PC-9 (cell line): ENCODE measurements at regions of chr9 and their contacts with region 1.

Region 1: DNA sequence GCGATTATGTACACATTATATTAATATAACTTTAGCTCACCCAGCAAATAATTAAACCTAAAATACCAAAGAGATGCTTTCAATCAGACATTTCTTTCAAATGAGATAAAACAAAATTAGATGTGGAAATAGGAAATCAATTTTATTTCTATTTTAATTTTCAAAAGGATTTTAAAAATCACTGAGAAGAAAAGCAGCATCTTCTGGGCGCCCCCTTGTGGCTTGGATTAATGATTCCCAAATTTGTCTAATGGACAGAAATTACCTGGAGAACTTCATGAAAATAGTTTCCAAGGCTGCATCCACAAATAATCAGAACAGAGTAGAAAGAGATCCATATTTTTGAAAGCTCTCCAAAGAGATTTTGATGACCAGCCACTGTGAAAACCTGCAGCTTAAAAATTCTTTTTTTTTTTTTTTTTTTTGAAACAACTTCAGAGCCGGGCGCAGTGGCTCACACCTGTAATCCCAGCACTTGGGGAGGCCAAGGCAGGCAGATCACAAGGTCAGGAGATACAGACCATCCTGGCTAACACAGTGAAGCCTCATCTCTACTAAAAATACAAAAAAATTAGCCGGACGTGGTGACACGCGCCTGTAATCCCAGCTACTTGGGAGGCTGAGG is 50.9 kb upstream of the CEMIP2 start:
- DNase-seq: peak in 1 of 2 experiments; percentile 28
- H3K4me3 ChIP-seq: no peak overlapping the region
- H3K27ac ChIP-seq: no peak overlapping the region
- H3K4me1 ChIP-seq: no peaks in the 10 kb centered on the region
- H3K27me3 ChIP-seq: no peaks in the 10 kb centered on the region
- CTCF ChIP-seq: peak; percentile 90

Region 2: DNA sequence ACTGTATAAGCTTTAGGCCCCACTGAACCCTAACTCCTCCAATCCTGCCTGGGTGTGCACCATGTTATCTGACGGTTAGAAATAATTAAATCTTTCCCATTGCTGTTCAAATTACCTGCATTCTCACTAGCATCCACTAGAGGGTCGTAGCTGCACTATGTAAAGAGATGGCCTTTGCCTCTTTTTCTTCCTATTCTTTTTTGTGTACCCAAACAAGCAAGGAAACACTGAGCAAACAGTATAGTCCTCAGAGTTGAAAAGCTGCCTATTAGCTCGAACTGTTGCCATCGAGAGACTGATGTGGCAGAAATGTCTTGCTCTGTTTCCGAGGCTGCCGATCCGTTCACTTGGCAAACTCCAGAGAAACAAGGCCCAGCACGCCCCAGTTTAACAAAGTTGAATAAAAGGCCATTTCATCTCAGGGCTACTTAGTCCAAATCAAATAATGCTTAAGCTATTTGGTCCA is 534.0 kb before region 1 on chr9:
- CTCF ChIA-PET with region 1: interaction called, 7 read pairs
- POLR2A ChIA-PET with region 1: no interaction called
- intact Hi-C with region 1: loop called (anchors 1 kb)
- DNase-seq: peak; percentile 49 to 55
- H3K4me3 ChIP-seq: no peak overlapping the region
- H3K27ac ChIP-seq: no peak overlapping the region
- H3K4me1 ChIP-seq: no peaks in the 10 kb centered on the region
- H3K27me3 ChIP-seq: no peaks in the 10 kb centered on the region
- CTCF ChIP-seq: peak; percentile 92

Region 3: DNA sequence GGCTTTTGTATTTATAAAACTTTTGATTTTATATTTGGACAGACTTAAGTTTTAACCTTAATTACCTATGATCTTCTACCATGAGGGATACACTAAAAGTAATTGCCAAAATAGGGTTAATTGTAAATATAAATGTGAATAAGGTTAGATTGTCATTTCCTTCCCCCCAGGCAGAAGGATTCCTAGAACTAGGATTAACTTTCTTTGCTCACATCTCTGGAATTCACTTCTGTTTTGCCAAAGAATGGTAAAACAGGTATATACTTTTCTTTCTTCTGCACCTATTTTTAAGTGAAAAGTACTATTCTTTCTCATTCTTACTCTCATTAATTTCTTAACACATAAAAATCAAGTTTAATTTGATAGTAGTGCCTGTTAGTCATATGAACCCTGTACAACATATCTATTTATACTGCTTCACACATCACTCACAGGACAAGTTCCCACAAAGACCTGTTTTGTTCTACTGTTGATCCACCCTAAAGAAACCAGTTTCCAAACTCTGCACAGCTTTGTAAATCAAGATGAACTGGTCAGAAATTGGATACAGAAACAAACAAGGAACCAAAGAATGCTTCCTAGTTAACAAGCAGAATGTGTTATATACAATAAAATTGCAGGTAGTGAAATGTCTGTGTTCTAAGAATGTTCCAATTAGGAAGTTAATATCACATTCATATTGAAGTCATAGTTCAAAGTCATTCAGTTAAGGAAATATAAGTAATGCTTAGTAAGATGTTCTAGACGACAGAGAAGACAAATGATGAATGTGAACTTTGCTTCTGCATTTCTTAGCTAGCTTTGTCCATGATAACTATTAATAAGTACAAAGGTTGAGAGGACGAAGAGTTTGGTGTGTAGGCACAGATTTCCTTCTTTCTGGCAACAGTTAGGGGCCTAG is 125.5 kb after region 1 on chr9:
- CTCF ChIA-PET with region 1: no interaction called
- POLR2A ChIA-PET with region 1: no interaction called
- intact Hi-C with region 1: no loop called
- DNase-seq: peak in 1 of 2 experiments; percentile 94
- H3K4me3 ChIP-seq: peak overlapping the region; percentile 28; the same call in 1 of the 2 replicates
- H3K27ac ChIP-seq: peak overlapping the region; percentile 80
- H3K4me1 ChIP-seq: peaks cover 29% of the 10 kb centered on the region
- H3K27me3 ChIP-seq: no peaks in the 10 kb centered on the region
- CTCF ChIP-seq: no peak